Activated CD4-positive, alpha-beta memory T cell treated with anti-CD3 and anti-CD28 coated beads, Interleukin-2, amount 10 ng/mL, durations not matched to agents 7 days and 5 days (primary cell): ENCODE measurements at regions of chr21 and their contacts with region 1.

Region 1: GRCh38 chr21:38352536-38353219 is 95.9 kb downstream of the KCNJ15 start:
- DNase-seq: peak; percentile 26
- H3K4me3 Mint-ChIP-seq: no peak overlapping the region
- H3K27ac Mint-ChIP-seq: no peak overlapping the region
- H3K4me1 Mint-ChIP-seq: no peaks in the 10 kb centered on the region
- H3K27me3 Mint-ChIP-seq: no peaks in the 10 kb centered on the region

Region 2: DNA sequence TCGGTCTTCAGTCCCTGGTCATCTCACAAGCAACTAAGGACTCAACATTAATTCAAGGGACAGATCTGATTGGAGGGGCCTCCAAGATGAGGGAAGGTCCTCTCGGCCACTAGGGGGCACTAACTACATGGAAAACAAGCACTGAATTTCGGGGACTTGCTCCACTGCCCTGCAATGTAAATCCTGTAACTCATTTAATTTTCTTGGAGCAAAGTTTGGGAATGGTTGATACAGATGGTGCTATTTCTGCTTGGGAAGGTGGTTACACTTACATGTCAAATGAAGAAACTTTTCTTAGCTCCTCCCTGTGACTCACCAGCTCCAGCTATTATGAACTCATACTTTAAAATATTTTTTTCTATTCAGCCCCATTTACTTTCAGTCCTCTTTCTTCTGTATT is 193.3 kb before region 1 on chr21:
- CTCF ChIA-PET with region 1: interaction called, 12 read pairs
- POLR2A ChIA-PET with region 1: no interaction called
- DNase-seq: peak; percentile 32
- H3K4me3 Mint-ChIP-seq: no peak overlapping the region
- H3K27ac Mint-ChIP-seq: no peak overlapping the region
- H3K4me1 Mint-ChIP-seq: no peaks in the 10 kb centered on the region
- H3K27me3 Mint-ChIP-seq: no peaks in the 10 kb centered on the region

Region 3: GRCh38 chr21:38219049-38219628 is 133.5 kb before region 1 on chr21:
- CTCF ChIA-PET with region 1: interaction called, 37 read pairs
- POLR2A ChIA-PET with region 1: no interaction called
- DNase-seq: peak; percentile 49
- H3K4me3 Mint-ChIP-seq: no peak overlapping the region
- H3K27ac Mint-ChIP-seq: no peak overlapping the region
- H3K4me1 Mint-ChIP-seq: no peaks in the 10 kb centered on the region
- H3K27me3 Mint-ChIP-seq: no peaks in the 10 kb centered on the region

Region 4: GRCh38 chr21:38363693-38364092 is 11.0 kb after region 1 on chr21:
- CTCF ChIA-PET with region 1: no interaction called
- POLR2A ChIA-PET with region 1: no interaction called
- DNase-seq: no peak
- H3K4me3 Mint-ChIP-seq: no peak overlapping the region
- H3K27ac Mint-ChIP-seq: no peak overlapping the region
- H3K4me1 Mint-ChIP-seq: no peaks in the 10 kb centered on the region
- H3K27me3 Mint-ChIP-seq: no peaks in the 10 kb centered on the region